CD4-positive, alpha-beta T cell (primary cell): ENCODE measurements at regions of chr1 and their contacts with region 1.

Region 1: GRCh38 chr1:234691567-234691966 is 81.6 kb upstream of the IRF2BP2 start:
- DNase-seq: peak in 3 of 14 experiments; percentile 19 to 53 (median 50)
- ATAC-seq: peak; percentile 76
- H3K4me3 ChIP-seq: no peak overlapping the region
- H3K4me3 Mint-ChIP-seq: no peak overlapping the region
- H3K27ac ChIP-seq: no peak overlapping the region
- H3K27ac Mint-ChIP-seq: no peak overlapping the region
- H3K4me1 ChIP-seq: no peaks in the 10 kb centered on the region
- H3K4me1 Mint-ChIP-seq: peaks cover 5% of the 10 kb centered on the region
- H3K27me3 ChIP-seq: no peaks in the 10 kb centered on the region
- H3K27me3 Mint-ChIP-seq: no peaks in the 10 kb centered on the region
- CTCF ChIP-seq: peak; percentile 35

Region 2: GRCh38 chr1:234670967-234671626 is 20.5 kb before region 1 on chr1:
- CTCF ChIA-PET with region 1: no interaction called
- POLR2A ChIA-PET with region 1: no interaction called
- intact Hi-C with region 1: no loop called
- DNase-seq: no peak
- ATAC-seq: no peak
- H3K4me3 ChIP-seq: no peak overlapping the region
- H3K4me3 Mint-ChIP-seq: no peak overlapping the region
- H3K27ac ChIP-seq: no peak overlapping the region
- H3K27ac Mint-ChIP-seq: no peak overlapping the region
- H3K4me1 ChIP-seq: peaks cover 5% of the 10 kb centered on the region
- H3K4me1 Mint-ChIP-seq: peaks cover 7% of the 10 kb centered on the region
- H3K27me3 ChIP-seq: no peaks in the 10 kb centered on the region
- H3K27me3 Mint-ChIP-seq: no peaks in the 10 kb centered on the region
- CTCF ChIP-seq: no peak

Region 3: GRCh38 chr1:235075188-235075926 is 383.8 kb after region 1 on chr1:
- CTCF ChIA-PET with region 1: no interaction called
- POLR2A ChIA-PET with region 1: no interaction called
- intact Hi-C with region 1: loop called in 1 of 2 experiments (anchors 5 kb)
- DNase-seq: peak in 11 of 14 experiments; percentile 10 to 80 (median 29)
- ATAC-seq: peak; percentile 68
- H3K4me3 ChIP-seq: peak overlapping the region; percentile 15
- H3K4me3 Mint-ChIP-seq: no peak overlapping the region
- H3K27ac ChIP-seq: no peak overlapping the region
- H3K27ac Mint-ChIP-seq: peak overlapping the region; percentile 73
- H3K4me1 ChIP-seq: peaks cover 38% of the 10 kb centered on the region
- H3K4me1 Mint-ChIP-seq: peaks cover 16% of the 10 kb centered on the region
- H3K27me3 ChIP-seq: no peaks in the 10 kb centered on the region
- H3K27me3 Mint-ChIP-seq: no peaks in the 10 kb centered on the region
- CTCF ChIP-seq: no peak